ENCODE measurements at regions of chr17 and their contacts with region 1.

Region 1: GRCh38 chr17:47229535-47230443 is 20.6 kb downstream of the MYL4 start:
- DNase-seq: peak; percentile 98
- H3K4me3 ChIP-seq: peak overlapping the region; percentile 66
- H3K27ac ChIP-seq: peak overlapping the region; percentile 52
- H3K4me1 ChIP-seq: peaks cover 23% of the 10 kb centered on the region
- H3K27me3 ChIP-seq: no peaks in the 10 kb centered on the region

Region 2: DNA sequence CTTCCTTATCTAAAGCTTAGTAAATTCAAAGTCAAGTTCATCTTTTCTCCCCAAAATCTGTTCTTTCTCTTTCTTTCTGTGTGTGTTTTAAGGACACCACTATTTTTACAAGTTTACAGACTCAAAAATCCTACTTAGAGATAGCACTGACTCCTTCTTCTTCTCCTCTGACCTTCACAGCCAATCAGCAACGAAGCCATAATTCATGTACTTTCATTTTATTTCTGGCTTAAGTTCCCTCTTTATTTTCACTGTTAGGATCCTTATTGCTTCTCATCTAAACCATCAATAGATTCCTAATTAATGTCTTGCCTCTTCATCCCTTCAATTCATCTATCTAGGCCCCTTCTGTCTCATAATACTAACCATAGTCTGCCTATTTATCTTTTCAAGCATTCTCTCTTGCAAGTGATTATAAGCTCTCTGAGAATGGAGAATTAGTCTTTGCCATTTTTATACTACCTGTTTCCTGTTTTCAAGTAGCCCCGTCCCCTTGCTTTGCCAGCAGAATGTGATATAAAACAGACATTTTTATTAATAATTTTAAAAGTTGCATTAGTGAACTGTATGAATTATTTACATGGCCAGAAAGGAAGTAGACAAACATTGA is 67.7 kb before region 1 on chr17:
- in situ Hi-C with region 1: no loop called
- DNase-seq: no peak
- H3K4me3 ChIP-seq: no peak overlapping the region
- H3K27ac ChIP-seq: no peak overlapping the region
- H3K4me1 ChIP-seq: no peaks in the 10 kb centered on the region
- H3K27me3 ChIP-seq: no peaks in the 10 kb centered on the region

Region 3: DNA sequence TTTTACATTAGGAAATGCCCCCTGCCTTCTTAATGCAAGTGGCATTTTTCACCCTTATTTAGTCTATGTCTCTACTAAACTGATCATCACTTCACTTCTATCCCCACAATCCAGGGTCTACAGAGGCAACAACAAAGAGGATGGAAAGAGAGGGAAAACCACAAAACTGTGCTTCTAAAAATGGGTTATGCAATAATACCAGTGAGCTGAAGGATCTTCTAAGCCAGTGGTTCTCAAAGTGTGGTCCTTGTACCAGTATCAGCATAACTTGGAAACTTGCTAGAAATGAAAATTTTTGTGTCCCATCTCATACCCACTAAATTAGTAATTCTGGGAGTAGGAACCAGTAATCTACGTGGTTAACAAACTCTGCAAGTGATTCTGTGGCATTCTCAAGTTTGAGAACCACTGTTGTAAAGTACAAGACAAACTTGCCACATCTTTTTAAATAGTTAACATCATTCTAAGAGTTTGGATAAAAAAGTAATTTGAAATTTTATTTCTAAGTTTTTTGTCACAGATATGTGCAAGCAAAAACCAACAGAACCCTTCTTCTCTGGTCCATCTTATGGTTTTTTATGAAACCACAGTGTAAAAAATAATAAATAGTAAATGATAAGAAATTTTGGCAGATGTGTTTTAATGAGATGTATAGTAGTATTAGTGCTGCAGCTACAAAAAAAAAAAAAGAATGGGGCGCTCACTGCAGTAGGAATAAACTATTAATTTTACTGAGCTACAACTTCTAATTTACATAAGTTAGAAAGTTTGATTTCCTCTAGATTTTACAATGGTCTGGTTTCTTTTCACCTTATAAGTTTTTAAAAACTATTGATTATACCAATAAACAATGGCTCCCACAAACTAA is 56.9 kb before region 1 on chr17:
- in situ Hi-C with region 1: no loop called
- DNase-seq: peak; percentile 5
- H3K4me3 ChIP-seq: no peak overlapping the region
- H3K27ac ChIP-seq: 0 out of 2 replicates have a peak overlapping the region, but pooled peaks have one; percentile 2
- H3K4me1 ChIP-seq: 0 out of 2 replicates have a peak, but pooled peaks cover 5% of the 10 kb centered on the region
- H3K27me3 ChIP-seq: no peaks in the 10 kb centered on the region

Region 4: GRCh38 chr17:47315451-47316266 is 85.9 kb after region 1 on chr17:
- in situ Hi-C with region 1: loop called (anchors 10 kb)
- DNase-seq: peak; percentile 89
- H3K4me3 ChIP-seq: peak overlapping the region; percentile 29
- H3K27ac ChIP-seq: peak overlapping the region; percentile 71
- H3K4me1 ChIP-seq: peaks cover 36% of the 10 kb centered on the region
- H3K27me3 ChIP-seq: no peaks in the 10 kb centered on the region

Measured in GM23248 (cell line).